Naive thymus-derived CD8-positive, alpha-beta T cell (primary cell): ENCODE measurements at regions of chr6 and their contacts with region 1.

Region 1: DNA sequence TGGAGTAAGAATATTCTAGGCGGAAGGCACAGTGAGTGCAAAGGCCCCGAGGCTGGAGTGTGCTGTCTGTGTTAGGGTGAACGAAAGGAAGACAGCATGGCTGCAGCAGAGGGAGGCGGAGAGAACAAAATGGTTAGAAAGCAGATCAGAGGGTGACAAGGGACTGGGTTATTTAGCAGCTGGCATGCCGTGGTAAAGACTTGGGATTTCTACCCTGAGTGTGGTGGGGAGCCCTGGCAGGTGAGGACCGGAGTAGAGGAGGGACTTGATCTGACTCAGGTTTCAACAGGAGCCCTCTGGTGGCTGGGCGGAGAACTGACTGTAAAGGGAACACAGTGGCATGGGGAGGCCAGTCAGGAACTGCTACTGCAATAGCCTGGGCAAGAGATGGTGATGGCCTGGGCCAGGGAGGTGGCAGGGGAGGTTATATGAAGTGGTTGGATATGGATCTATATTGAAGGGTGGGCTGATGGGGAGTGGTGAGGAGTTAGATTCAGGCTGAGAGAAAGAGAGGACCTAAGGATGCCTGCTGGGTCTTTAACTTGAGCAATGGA is 38.0 kb downstream of the PIM1 start:
- DNase-seq: peak; percentile 66 to 94 (median 83)
- ATAC-seq: peak; percentile 55 to 74
- H3K4me3 Mint-ChIP-seq: peak overlapping the region in 9 of 10 donors; percentile 54 to 81 (median 66)
- H3K27ac Mint-ChIP-seq: peak overlapping the region; percentile 83 to 94 (median 91)
- H3K4me1 Mint-ChIP-seq: peaks cover 34 to 63% (median 61%) of the 10 kb centered on the region in 4 donors
- H3K27me3 Mint-ChIP-seq: peaks cover 0 to 2% (median 0%) of the 10 kb centered on the region in 5 donors

Region 2: GRCh38 chr6:37018198-37019064 is 189.5 kb before region 1 on chr6:
- POLR2A ChIA-PET with region 1: interaction called, 68 read pairs
- DNase-seq: peak; percentile 68 to 92 (median 82)
- ATAC-seq: peak; percentile 93 to 95
- H3K4me3 Mint-ChIP-seq: no peak overlapping the region
- H3K27ac Mint-ChIP-seq: peak overlapping the region; percentile 17 to 92 (median 76)
- H3K4me1 Mint-ChIP-seq: peaks cover 27 to 47% (median 42%) of the 10 kb centered on the region in 4 donors
- H3K27me3 Mint-ChIP-seq: no peaks in the 10 kb centered on the region

Region 3: GRCh38 chr6:37051138-37052026 is 156.6 kb before region 1 on chr6:
- POLR2A ChIA-PET with region 1: interaction called, 21 read pairs
- DNase-seq: peak; percentile 73 to 91 (median 84)
- ATAC-seq: peak; percentile 71 to 78
- H3K4me3 Mint-ChIP-seq: peak overlapping the region; percentile 50 to 91 (median 75)
- H3K27ac Mint-ChIP-seq: peak overlapping the region; percentile 81 to 98 (median 94)
- H3K4me1 Mint-ChIP-seq: peaks cover 38 to 70% (median 61%) of the 10 kb centered on the region in 4 donors
- H3K27me3 Mint-ChIP-seq: no peaks in the 10 kb centered on the region

Region 4: DNA sequence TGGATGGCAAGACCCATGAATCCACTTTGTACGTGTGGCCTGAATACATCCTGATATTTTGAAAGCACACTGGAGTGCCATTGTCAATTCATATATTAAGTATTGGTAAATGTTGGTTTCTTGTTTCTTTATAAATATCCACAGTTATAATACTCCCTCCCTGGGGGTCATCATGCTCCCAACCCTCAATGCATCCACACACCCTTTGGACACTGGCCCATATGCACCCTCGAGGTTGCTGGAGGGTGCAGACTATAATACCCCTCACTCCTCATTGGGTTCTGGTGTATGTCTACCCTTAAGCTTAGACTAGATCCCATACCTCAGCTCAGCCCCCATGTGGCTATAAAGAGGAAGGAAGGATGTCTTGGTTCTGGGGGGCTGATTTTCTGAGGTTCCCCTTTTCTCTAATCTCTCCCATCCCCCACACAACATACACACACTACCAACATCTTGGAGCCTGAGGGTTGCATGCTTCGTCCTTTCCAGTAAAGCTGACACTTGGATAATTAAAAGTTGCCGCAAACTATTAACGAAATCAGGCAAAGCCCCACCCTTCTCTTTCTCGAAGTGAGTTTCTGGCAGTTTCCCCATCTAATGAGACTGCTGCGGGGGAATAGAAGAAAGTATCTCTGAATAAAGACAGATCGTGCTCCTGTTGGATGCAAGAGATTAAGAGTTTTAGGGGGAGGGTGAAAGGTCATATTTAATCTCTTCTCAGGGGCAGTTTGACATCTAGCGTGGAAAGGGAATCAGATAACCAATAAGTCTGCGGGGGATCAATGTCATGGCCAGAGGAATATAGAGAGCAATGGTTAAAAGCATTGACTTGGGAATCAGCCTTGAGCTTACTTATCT is 30.7 kb before region 1 on chr6:
- POLR2A ChIA-PET with region 1: interaction called, 76 read pairs
- DNase-seq: no peak
- ATAC-seq: no peak
- H3K4me3 Mint-ChIP-seq: peak overlapping the region in 9 of 10 donors; percentile 26 to 76 (median 49)
- H3K27ac Mint-ChIP-seq: peak overlapping the region; percentile 72 to 99 (median 86)
- H3K4me1 Mint-ChIP-seq: peaks cover 40 to 81% (median 70%) of the 10 kb centered on the region in 4 donors
- H3K27me3 Mint-ChIP-seq: no peaks in the 10 kb centered on the region

Region 5: GRCh38 chr6:37190159-37190535 is 17.8 kb before region 1 on chr6:
- POLR2A ChIA-PET with region 1: interaction called, 15 read pairs
- DNase-seq: no peak
- ATAC-seq: no peak
- H3K4me3 Mint-ChIP-seq: peak overlapping the region in 6 of 10 donors; percentile 33 to 66 (median 45)
- H3K27ac Mint-ChIP-seq: peak overlapping the region in 7 of 10 donors; percentile 52 to 81 (median 71)
- H3K4me1 Mint-ChIP-seq: peaks cover 25 to 75% (median 63%) of the 10 kb centered on the region in 4 donors
- H3K27me3 Mint-ChIP-seq: no peaks in the 10 kb centered on the region

Region 6: GRCh38 chr6:37232430-37233017 is 24.5 kb after region 1 on chr6:
- POLR2A ChIA-PET with region 1: no interaction called
- DNase-seq: no peak
- ATAC-seq: no peak
- H3K4me3 Mint-ChIP-seq: no peak overlapping the region
- H3K27ac Mint-ChIP-seq: no peak overlapping the region
- H3K4me1 Mint-ChIP-seq: no peaks in the 10 kb centered on the region
- H3K27me3 Mint-ChIP-seq: peaks cover 0 to 7% (median 2%) of the 10 kb centered on the region in 5 donors